Left ventricle myocardium superior (tissue), 1 donor: ENCODE measurements at regions of chr22 and their contacts with region 1.

Region 1: GRCh38 chr22:40036591-40037225 is 42.0 kb downstream of the FAM83F start:
- DNase-seq: peak; percentile 65
- ATAC-seq: peak; percentile 73

Region 2: GRCh38 chr22:39532215-39533071 is 504.3 kb before region 1 on chr22 and contains the start of gene RPS19BP1:
- intact Hi-C with region 1: loop called (anchors 10 kb)
- DNase-seq: peak; percentile 99
- ATAC-seq: peak; percentile 89
- total RNA-seq, gene RPS19BP1: 58.1 TPM

Region 3: DNA sequence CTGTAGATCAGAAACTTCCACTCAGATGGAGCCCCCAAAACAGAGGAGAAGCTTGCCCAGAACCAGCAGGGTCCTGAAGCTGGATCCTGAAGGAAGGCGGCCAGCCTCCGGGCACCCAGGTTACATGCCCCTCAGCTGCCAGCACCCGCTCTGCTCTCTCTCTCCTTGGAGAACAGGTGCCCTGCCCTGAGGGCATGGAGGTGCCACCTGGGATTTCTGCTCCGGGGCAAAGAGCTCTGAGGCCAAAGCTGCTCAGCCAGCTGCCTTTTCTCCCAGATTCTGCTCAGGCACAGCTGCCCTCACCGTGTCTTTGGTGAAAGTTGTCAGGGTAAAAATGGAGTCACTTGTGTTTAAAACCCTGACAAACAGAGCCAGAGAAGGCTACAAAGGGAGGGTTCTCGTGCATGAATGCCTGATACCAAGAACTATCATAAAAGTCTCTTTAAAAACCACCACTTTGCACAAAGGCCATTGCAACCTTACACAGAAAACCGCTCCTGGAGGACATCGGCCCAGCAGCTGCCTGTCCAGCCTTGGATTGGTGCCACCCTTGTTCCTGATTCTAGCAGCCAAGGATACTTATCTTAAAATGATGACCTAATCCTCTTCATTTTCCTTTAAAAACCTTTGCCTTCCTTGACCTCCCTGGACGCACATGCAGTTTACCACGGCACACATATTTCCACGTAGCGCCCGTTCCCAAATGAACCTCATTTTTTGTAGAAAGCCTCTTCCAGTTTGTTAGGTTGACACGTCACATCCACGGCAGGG is 326.1 kb before region 1 on chr22:
- intact Hi-C with region 1: no loop called
- DNase-seq: peak; percentile 54
- ATAC-seq: peak; percentile 59